Keratinocyte (primary cell): ENCODE measurements at regions of chr17 and their contacts with region 1.

Region 1: DNA sequence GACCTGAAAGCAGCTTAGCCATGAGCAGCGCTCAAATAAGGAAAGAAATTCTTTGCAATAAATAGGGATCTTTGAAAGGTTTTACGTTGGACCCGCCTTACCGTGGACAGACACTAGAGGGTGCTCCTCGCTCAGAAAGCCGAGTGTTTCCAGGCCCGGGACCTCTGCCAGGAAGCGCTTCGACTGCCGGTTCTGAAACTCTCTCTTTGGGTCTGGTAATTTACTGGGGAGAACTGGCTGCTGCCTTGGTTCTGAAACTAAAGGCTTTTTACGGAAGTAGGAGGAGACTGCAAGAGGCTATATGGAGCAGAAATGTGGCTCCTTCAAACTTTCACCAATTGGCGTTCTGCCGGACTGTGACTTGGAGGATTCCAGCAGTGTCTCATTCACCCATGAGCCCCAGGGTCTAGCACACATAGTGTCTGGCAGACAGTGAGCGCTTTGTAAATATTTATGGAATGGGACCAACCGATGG is 45.6 kb upstream of the HOXB9 start:
- DNase-seq: no peak
- H3K4me3 ChIP-seq: peak overlapping the region; percentile 20 to 60 (median 53)
- H3K27ac ChIP-seq: no peak overlapping the region
- H3K4me1 ChIP-seq: peaks cover 7% of the 10 kb centered on the region
- H3K27me3 ChIP-seq: peaks cover 3% of the 10 kb centered on the region
- CTCF ChIP-seq: peak; percentile 76 to 90 (median 82)

Region 2: DNA sequence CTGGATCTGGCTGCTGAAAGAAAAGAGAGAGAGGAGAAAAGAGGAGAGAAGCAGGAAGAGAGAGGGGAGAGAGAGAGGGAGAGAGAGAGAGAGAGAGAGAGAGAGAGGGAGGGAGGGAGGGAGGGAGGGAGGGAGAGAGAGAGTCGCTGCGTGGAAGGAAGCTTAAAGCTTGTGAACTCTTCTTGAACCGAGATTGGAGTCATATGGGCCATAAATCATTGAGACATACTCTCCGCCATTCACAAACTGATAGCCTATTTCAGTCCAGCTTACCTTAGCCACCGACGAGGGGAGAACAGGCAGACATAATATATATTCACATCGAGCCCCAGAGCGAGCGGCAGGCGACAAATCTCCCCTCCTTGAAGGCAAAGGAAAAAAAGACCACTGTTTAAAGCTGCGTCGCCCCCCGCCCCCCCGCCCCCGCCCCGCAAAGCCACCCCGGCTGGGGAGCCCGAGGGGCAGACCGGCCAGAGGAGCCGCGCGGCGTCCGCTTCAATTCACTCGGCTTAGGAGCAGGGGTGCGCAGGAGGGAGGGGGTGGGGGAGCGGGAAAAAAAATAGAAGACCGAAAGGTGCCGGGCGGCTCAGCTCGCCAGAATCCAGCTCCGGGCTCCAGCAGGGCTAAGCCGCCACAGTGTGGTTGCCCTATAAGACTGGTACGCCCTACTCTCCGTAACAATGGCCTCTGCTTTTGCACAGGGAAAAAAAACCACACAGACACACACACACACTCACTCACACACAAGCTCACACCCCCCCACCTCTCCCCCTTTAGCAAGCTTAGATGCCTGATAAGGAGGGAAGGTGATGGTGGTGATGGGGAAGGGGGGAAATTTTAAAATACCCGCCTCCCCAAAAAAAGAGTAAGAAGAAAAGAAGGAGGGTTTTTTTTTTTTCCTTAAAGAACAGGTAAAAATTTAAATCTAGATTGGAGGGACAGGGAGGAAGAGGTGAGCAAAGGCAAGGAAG is 116.2 kb before region 1 on chr17:
- dilution Hi-C with region 1: no loop called
- DNase-seq: no peak
- H3K4me3 ChIP-seq: peak overlapping the region; percentile 6 to 43 (median 16)
- H3K27ac ChIP-seq: no peak overlapping the region
- H3K4me1 ChIP-seq: peaks cover 14% of the 10 kb centered on the region
- H3K27me3 ChIP-seq: peaks cover 20% of the 10 kb centered on the region
- CTCF ChIP-seq: no peak

Region 3: DNA sequence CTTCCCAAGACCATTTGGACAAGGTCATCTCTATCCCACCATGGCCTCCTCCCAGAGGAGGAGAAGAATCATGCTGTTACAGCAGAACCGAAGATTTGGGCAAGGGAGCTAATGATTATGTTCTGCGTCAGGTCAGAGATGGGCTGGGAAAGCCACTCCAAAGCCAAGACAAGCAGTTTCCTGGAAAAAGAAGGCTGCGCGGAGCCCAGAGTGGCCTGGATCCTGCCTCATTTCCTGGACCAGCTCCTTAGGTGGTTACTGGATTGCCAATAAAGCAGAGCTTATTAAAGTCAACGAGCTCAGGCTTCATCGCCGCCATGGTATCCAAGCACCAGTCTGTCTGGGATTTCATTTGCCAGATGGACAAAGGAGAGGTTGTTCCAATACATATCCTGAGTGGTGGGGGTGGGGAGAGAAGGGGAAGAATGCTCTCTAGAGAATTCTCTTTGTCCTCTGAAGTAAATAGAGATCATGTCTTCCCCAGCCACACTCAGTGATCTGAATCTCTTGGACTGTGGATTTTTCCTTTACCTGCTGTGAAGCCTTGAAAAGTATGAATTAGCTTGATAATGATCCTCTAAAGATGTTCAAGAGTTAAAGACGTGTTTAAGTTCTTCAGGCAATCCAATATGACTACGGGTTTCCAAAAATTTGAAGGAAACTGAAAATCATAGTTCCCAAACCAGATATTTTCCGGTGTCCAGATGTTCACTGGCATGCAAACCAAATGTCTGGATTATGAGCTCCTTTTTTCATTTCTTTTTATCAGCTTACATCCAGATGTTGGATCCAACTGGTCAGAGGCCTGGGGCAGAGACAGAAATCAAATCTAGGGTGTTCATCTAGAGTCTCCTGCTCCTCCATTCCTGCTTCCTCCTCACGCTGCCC is 32.9 kb after region 1 on chr17:
- dilution Hi-C with region 1: no loop called
- DNase-seq: no peak
- H3K4me3 ChIP-seq: no peak overlapping the region
- H3K27ac ChIP-seq: no peak overlapping the region
- H3K4me1 ChIP-seq: no peaks in the 10 kb centered on the region
- H3K27me3 ChIP-seq: peaks cover 25% of the 10 kb centered on the region
- CTCF ChIP-seq: no peak

Region 4: GRCh38 chr17:48756830-48757251 is 85.1 kb after region 1 on chr17:
- dilution Hi-C with region 1: loop called (anchors 25 kb)
- DNase-seq: no peak
- H3K4me3 ChIP-seq: no peak overlapping the region
- H3K27ac ChIP-seq: no peak overlapping the region
- H3K4me1 ChIP-seq: no peaks in the 10 kb centered on the region
- H3K27me3 ChIP-seq: peaks cover 67% of the 10 kb centered on the region
- CTCF ChIP-seq: no peak

Region 5: GRCh38 chr17:49471089-49471683 is 799.5 kb after region 1 on chr17:
- dilution Hi-C with region 1: no loop called
- DNase-seq: no peak
- H3K4me3 ChIP-seq: no peak overlapping the region
- H3K27ac ChIP-seq: no peak overlapping the region
- H3K4me1 ChIP-seq: no peaks in the 10 kb centered on the region
- H3K27me3 ChIP-seq: peaks cover 56% of the 10 kb centered on the region
- CTCF ChIP-seq: no peak